Gastrocnemius medialis (tissue), 4 donors: ENCODE measurements at regions of chr13 and their contacts with region 1.

Region 1: DNA sequence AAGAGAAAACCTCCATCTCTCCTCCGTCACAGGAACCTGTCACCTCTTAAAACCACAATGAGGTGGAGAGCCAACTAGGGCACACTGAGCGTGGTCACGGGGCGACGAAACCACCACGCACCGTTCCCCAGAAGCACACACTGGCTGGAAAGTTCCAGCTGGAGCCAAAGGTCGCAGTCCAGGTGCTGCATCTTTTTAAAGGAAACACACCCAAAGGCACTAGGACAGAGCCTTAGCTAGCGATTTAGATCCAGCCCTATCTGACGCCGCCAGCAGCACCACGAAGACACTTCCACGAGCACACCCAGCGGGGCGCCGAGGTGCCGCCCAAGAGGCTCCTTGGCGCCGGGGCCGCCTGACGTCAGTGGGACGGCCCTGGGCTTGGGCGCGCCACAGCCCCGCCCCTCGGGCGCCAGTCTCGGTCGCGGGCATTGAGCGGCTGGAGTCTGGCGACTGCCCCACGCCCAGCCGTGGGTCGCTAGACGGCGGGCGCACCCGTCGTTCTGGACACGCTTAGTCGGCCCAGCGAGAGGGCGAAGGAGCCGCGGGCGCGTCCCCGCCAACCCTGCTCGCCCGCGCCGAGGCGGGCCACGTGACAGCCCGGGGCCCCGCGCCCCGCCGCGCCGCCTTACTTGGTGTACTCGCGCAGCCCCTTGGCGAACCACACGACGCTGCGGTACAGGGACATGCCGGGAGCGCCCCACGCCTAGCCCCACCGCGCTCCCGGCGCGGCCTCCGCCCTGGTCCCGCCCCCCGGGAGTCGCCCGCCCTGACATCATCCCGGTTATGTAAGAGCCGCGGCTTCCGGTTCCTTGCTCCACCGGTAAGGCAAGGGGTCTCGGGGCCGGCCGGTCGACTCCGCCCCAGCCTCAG is at the start of gene DHRS12:
- DNase-seq: peak; percentile 68 to 85
- ATAC-seq: peak; percentile 81 to 87
- H3K4me3 ChIP-seq: peak within 1 kb of the TSS; percentile 74 to 99 (median 86)
- H3K27ac ChIP-seq: peak within 1 kb of the TSS; percentile 89 to 100 (median 96)
- H3K4me1 ChIP-seq: peaks cover 37 to 46% of the 10 kb centered on the region in 2 donors
- H3K27me3 ChIP-seq: no peaks in the 10 kb centered on the region
- CTCF ChIP-seq: peak in 1 of 5 experiments; percentile 4
- POLR2A ChIP-seq: peak; percentile 90 to 93
- total RNA-seq, gene DHRS12: 1.8 to 6.0 (median 4.7) TPM

Region 2: DNA sequence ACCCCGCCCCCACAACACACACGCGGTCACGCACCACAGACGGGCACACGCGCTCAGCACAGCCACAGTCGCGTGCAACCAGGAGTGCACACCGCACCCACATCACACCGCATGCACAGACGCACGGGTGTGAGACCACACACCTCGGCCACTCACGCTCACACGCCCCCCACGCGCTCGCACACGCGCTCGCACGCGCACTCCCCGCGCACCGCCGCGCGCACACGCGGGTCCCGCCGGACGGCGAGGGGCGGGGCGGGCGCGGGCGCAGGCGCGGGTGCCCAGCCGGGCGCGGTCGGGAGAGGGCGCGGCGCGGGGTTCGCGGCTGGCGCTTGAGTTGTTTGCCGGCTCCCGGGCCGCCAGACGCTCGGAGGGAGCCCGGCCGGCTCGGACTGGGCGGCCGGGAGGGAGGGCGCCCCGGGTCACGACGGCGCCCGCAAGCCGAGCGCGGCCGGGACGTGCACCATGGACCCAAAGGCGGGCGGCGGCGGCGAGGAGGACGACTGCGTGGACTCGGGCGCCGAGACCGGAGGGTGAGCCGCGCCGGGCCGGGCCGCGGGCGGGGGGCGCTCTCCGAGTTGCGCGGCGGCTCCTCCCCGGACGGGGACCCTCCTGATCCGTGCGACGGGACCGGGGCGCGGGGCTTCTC is 581.5 kb before region 1 on chr13 and contains the start of gene FAM124A:
- in situ Hi-C with region 1: no loop called
- intact Hi-C with region 1: loop called (anchors 10 kb)
- DNase-seq: no peak
- ATAC-seq: peak; percentile 65 to 74
- H3K4me3 ChIP-seq: peak within 1 kb of the TSS; percentile 57 to 79 (median 66)
- H3K27ac ChIP-seq: peak within 1 kb of the TSS in 3 of 4 donors; percentile 4 to 45 (median 31)
- H3K4me1 ChIP-seq: peaks cover 0 to 4% of the 10 kb centered on the region in 2 donors
- H3K27me3 ChIP-seq: no peaks in the 10 kb centered on the region
- CTCF ChIP-seq: peak in 4 of 5 experiments; percentile 24 to 62 (median 39)
- POLR2A ChIP-seq: peak in 1 of 2 donors; percentile 10
- total RNA-seq, gene FAM124A: 0.66 to 2.0 (median 0.81) TPM

Region 3: DNA sequence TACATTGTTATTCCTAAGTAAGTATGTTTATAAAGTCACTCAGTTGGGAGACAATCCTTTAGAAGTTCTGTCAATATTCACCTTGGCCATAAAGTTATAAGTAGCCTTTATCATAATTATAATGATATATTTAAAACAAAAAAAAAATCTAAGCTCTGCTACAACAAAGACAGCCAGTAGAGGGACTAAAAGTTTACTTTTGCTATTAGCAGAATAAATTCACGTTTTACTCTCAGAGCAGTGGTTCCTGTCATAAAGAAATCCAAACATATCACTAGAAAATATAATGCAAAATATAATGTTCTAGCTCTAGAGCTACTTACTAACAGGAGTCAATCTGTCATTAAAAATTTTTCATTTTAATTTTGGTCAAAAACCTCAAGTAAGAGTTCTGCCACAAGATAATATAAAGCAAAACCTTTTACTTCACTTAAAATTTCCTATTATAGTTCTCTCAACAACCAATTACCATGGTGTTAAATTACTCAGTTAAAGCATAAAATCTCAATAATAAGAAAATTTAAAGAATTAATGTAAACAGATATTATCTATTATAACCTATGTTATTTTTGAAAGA is 368.6 kb before region 1 on chr13:
- in situ Hi-C with region 1: loop called in 2 of 4 experiments (anchors 10 to 25 kb)
- intact Hi-C with region 1: no loop called
- DNase-seq: no peak
- ATAC-seq: no peak
- H3K4me3 ChIP-seq: no peak overlapping the region
- H3K27ac ChIP-seq: no peak overlapping the region
- H3K4me1 ChIP-seq: peaks cover 5 to 8% of the 10 kb centered on the region in 2 donors
- H3K27me3 ChIP-seq: no peaks in the 10 kb centered on the region
- CTCF ChIP-seq: peak in 3 of 5 experiments; percentile 29 to 47 (median 47)
- POLR2A ChIP-seq: no peak

Region 4: GRCh38 chr13:51729866-51730546 is 73.7 kb before region 1 on chr13:
- in situ Hi-C with region 1: no loop called
- intact Hi-C with region 1: loop called (anchors 2 kb)
- DNase-seq: peak in 1 of 2 donors; percentile 41
- ATAC-seq: peak; percentile 68 to 71
- H3K4me3 ChIP-seq: no peak overlapping the region
- H3K27ac ChIP-seq: peak overlapping the region; percentile 53 to 69 (median 65)
- H3K4me1 ChIP-seq: peaks cover 0 to 8% of the 10 kb centered on the region in 2 donors
- H3K27me3 ChIP-seq: no peaks in the 10 kb centered on the region
- CTCF ChIP-seq: no peak
- POLR2A ChIP-seq: no peak

Region 5: DNA sequence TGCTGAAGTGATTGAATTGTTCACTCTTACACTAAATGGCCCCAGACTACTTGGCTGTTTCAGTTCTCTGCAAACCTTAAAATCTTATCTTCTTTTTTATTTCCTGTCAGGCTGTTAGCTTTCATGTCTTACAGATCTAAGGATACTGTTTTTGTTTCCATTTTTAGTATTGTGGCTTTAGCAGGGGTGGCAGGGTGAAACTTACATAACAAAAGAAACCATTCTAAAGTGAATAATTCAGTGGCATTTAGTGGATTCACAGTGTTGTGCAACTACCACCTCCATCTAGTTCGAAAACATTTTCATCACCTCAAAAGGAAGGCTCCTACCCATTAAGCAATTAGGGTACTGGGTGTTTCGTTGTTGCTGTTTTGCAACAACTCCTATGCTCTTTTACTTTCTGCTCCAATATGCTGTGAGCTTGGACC is 21.5 kb after region 1 on chr13:
- in situ Hi-C with region 1: no loop called
- intact Hi-C with region 1: no loop called
- DNase-seq: no peak
- ATAC-seq: peak; percentile 51 to 55
- H3K4me3 ChIP-seq: no peak overlapping the region
- H3K27ac ChIP-seq: no peak overlapping the region
- H3K4me1 ChIP-seq: peaks cover 0 to 4% of the 10 kb centered on the region in 2 donors
- H3K27me3 ChIP-seq: no peaks in the 10 kb centered on the region
- CTCF ChIP-seq: no peak
- POLR2A ChIP-seq: no peak

Region 6: GRCh38 chr13:52194184-52194868 is 390.7 kb after region 1 on chr13:
- in situ Hi-C with region 1: no loop called
- intact Hi-C with region 1: loop called (anchors 10 kb)
- DNase-seq: peak; percentile 69 to 81
- ATAC-seq: peak; percentile 93 to 94
- H3K4me3 ChIP-seq: peak overlapping the region; percentile 74 to 98 (median 88)
- H3K27ac ChIP-seq: peak overlapping the region; percentile 81 to 88 (median 87)
- H3K4me1 ChIP-seq: peaks cover 11 to 25% of the 10 kb centered on the region in 2 donors
- H3K27me3 ChIP-seq: no peaks in the 10 kb centered on the region
- CTCF ChIP-seq: no peak
- POLR2A ChIP-seq: peak in 1 of 2 donors; percentile 22